ENCODE measurements at regions of chr11 and their contacts with region 1.

Region 1: DNA sequence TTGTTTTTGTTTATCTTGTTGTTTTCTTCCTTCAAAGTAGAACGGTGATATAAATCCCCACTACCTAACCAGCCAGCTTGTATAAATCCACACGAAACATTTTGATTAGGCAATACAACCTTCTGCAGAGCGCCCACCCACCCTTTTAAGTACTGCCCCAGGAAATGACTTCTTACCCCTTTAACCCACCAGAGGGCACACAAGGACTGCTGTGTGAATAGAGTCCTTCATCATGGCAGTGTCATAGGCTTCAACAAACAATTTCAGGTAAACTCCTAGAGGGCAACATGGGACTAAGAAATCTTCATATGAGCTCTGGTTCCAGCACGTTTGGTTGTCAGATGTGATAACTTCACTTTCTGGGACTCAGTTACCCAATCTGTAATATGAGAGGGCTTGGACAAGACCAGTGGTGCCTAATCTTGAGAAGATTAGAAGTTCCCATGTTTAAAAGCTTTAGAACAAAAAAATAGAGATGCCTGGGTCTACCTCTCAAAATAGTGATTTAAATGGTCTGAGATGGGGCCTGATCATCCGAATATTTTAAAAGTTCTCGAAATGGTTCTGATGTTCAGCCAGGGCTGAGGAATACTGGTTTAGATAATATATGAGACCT is 56.1 kb downstream of the PIWIL4 start:
- DNase-seq: peak; percentile 63
- H3K4me3 Mint-ChIP-seq: no peak overlapping the region
- H3K27ac Mint-ChIP-seq: no peak overlapping the region
- H3K4me1 Mint-ChIP-seq: no peaks in the 10 kb centered on the region
- H3K27me3 Mint-ChIP-seq: no peaks in the 10 kb centered on the region
- CTCF ChIP-seq: peak; percentile 73

Region 2: DNA sequence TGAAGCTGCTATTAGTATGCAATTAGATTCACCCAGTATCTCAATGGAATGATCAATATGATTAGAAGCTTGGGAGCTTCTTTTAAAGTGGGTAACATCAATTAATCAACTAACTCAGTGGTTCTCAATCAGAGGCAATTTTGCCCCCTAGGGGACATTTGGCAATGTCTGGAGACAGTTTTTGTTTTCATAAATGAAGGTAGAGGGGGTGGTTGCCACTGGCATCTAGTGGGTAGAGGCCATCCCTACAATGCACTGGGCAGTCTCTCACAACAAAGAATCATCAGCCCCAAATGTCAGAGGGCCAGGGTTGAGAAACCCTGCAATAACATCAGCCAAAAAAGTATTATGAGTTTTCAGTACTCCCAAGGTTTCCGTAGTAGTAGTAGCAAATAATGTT is 139.0 kb after region 1 on chr11:
- CTCF ChIA-PET with region 1: interaction called, 18 read pairs
- intact Hi-C with region 1: loop called (anchors 1 kb)
- DNase-seq: peak; percentile 49
- H3K4me3 Mint-ChIP-seq: no peak overlapping the region
- H3K27ac Mint-ChIP-seq: no peak overlapping the region
- H3K4me1 Mint-ChIP-seq: no peaks in the 10 kb centered on the region
- H3K27me3 Mint-ChIP-seq: no peaks in the 10 kb centered on the region
- CTCF ChIP-seq: peak; percentile 26

Region 3: DNA sequence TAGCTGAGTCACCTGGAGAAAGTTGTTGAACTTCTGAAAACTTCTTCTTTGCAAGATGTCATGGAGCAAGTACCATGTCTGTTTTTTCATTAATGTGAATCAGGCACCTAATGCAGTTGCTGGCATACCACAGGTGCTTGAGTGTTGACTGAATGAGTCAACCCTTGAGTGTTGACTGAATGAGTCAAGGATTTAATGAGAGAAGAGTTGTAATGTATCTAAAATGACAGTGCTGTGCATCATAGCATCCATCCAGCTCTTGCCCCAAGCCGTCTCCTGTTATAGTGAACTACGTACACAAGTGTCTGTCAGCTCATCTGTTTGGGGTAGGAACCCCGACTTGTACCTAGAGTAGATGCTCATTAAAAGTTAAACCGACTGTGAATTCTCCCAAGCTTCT is 257.0 kb after region 1 on chr11:
- CTCF ChIA-PET with region 1: no interaction called
- intact Hi-C with region 1: loop called (anchors 1 kb)
- DNase-seq: no peak
- H3K4me3 Mint-ChIP-seq: no peak overlapping the region
- H3K27ac Mint-ChIP-seq: no peak overlapping the region
- H3K4me1 Mint-ChIP-seq: peaks cover 21% of the 10 kb centered on the region
- H3K27me3 Mint-ChIP-seq: no peaks in the 10 kb centered on the region
- CTCF ChIP-seq: no peak

Region 4: DNA sequence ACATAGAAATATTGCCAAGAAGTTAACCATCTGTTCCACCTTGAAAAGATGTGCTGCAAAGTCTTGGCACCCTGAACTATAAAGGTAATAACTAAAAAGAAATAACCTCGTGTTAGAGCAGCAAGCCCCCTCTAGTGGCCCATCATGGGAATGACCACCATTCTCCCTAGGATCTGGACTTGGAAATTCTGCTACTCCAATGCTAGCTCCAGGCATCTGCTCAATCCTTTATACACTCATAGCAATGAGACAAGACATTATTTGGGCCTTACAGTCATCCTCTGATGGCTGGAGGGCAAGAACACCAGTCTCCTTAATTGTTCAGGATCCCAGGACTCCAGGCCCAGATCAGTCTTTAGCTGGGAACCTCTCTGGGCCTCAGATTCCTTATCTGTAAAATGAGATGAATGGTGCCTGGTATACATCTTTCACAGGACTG is 274.1 kb after region 1 on chr11:
- CTCF ChIA-PET with region 1: interaction called, 8 read pairs
- intact Hi-C with region 1: loop called (anchors 1 kb)
- DNase-seq: peak; percentile 26
- H3K4me3 Mint-ChIP-seq: no peak overlapping the region
- H3K27ac Mint-ChIP-seq: no peak overlapping the region
- H3K4me1 Mint-ChIP-seq: no peaks in the 10 kb centered on the region
- H3K27me3 Mint-ChIP-seq: no peaks in the 10 kb centered on the region
- CTCF ChIP-seq: peak; percentile 58

Region 5: DNA sequence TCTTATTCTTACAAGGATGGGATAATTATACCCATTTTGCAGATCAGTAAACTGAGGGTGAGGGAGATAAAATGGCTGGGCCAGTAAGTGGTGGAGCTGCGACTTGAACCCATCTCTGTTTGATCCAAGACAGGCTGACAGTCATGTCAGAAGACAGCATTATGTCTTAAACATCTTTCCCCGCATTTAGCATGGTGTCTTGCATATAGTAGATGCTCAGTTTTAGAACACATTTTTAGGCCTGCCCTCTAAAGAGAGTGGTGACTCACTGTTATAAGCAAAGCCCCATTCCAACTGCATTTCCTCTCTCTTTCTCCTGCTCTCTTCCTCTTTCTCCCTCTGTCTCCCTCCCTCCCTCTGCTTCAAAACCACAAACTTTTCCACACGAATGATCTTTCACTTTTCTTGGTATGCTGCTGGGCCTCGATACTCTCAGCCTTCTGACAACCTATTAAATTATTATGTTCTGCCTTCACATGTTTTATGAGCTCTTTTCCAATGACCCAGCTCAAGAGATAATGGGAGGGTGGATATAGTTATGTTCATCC is 324.9 kb after region 1 on chr11:
- CTCF ChIA-PET with region 1: no interaction called
- intact Hi-C with region 1: no loop called
- DNase-seq: no peak
- H3K4me3 Mint-ChIP-seq: no peak overlapping the region
- H3K27ac Mint-ChIP-seq: no peak overlapping the region
- H3K4me1 Mint-ChIP-seq: no peaks in the 10 kb centered on the region
- H3K27me3 Mint-ChIP-seq: peaks cover 13% of the 10 kb centered on the region
- CTCF ChIP-seq: no peak

Region 6: DNA sequence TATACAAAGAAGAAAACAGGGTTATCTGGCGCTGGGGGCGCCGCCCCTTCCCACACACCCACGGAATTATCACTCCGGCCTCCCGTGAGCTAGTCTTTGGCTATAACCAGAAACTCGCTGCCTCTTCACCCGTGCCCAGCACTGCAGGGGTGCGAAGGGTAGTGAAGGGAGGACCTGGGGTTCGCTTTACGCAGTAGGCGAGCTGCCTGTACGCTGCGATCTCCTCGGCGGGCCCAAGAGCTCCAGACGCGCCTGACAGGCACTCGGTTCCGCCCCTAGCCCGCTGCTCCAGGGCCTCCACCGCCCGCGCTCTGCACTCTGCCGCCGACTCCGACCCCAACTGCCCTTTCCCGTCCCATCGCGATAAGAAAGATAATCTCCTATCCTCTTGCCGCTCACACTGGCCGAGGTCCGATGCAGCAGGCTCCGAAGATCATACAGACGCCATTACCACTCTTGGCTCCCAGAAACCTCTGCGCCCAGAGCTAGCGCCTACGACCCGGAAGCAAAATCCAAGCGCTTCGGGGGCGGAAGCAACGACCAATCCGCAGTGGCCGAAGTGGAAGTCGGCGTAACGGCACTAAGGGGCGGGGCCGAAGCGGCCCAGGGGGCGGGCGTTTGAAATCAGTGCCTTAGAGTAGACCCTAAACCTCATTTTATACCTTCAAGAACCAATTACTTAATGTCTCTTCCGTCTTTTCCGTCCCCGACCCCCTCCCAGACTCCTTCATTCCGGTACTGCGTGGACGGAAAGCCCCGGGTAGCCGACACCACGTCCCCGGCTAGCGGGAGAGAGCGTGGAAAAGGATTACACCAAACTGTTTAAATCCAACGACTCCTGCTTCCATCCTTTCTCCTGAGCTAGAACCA is 350.1 kb after region 1 on chr11 and contains the starts of genes CWC15 and KDM4D:
- CTCF ChIA-PET with region 1: no interaction called
- intact Hi-C with region 1: loop called (anchors 5 kb)
- DNase-seq: peak; percentile 88
- H3K4me3 Mint-ChIP-seq: peak within 1 kb of the TSS; percentile 98
- H3K27ac Mint-ChIP-seq: peak within 1 kb of the TSS; percentile 98
- H3K4me1 Mint-ChIP-seq: peaks cover 9% of the 10 kb centered on the region
- H3K27me3 Mint-ChIP-seq: no peaks in the 10 kb centered on the region
- CTCF ChIP-seq: no peak
- total RNA-seq, gene CWC15: 38.8 and 48.6 TPM in 2 replicates
- total RNA-seq, gene KDM4D: 0.68 and 1.2 TPM in 2 replicates